Activated CD8-positive, alpha-beta T cell treated with anti-CD3 and anti-CD28 coated beads for 36 hours (primary cell): ENCODE measurements at regions of chr14 and their contacts with region 1.

Region 1: GRCh38 chr14:70714055-70714621 is 72.4 kb downstream of the TTC9 start:
- DNase-seq: peak; percentile 70
- ATAC-seq: peak; percentile 64
- H3K4me3 Mint-ChIP-seq: no peak overlapping the region
- H3K27ac Mint-ChIP-seq: no peak overlapping the region
- H3K4me1 Mint-ChIP-seq: peaks cover 2% of the 10 kb centered on the region
- H3K27me3 Mint-ChIP-seq: no peaks in the 10 kb centered on the region
- CTCF ChIP-seq: peak; percentile 97

Region 2: DNA sequence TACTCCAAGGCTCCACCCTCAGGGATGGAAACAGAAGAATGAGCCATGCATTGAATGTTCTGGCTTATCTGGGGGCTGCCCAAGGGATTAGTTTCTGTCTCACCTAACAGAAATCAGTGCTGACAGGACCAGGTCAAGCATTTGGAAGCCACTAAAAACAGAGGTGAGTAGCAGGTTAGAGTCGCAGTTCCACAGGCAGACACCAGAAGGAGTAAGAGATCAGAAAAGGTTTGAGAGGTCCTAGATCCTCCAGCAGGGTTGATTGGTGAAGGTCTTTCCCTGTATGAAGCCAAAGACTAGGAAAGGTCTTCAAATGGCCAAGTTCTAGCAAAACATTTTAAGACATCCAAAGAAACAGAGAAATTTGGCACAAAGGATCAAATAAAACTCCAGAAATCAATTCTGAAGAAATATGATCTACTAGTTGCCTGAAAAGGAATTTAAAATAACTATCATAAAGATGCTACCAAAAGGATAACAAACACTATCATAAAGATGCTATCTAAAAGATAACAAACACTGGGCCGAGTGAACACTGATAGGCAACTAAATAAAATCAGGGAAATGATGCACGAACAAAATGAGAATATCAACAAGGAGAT is 91.9 kb before region 1 on chr14:
- CTCF ChIA-PET with region 1: interaction called, 102 read pairs
- POLR2A ChIA-PET with region 1: no interaction called
- intact Hi-C with region 1: loop called (anchors 1 kb)
- DNase-seq: peak; percentile 71
- ATAC-seq: peak; percentile 94
- H3K4me3 Mint-ChIP-seq: no peak overlapping the region
- H3K27ac Mint-ChIP-seq: no peak overlapping the region
- H3K4me1 Mint-ChIP-seq: no peaks in the 10 kb centered on the region
- H3K27me3 Mint-ChIP-seq: no peaks in the 10 kb centered on the region
- CTCF ChIP-seq: peak; percentile 83

Region 3: DNA sequence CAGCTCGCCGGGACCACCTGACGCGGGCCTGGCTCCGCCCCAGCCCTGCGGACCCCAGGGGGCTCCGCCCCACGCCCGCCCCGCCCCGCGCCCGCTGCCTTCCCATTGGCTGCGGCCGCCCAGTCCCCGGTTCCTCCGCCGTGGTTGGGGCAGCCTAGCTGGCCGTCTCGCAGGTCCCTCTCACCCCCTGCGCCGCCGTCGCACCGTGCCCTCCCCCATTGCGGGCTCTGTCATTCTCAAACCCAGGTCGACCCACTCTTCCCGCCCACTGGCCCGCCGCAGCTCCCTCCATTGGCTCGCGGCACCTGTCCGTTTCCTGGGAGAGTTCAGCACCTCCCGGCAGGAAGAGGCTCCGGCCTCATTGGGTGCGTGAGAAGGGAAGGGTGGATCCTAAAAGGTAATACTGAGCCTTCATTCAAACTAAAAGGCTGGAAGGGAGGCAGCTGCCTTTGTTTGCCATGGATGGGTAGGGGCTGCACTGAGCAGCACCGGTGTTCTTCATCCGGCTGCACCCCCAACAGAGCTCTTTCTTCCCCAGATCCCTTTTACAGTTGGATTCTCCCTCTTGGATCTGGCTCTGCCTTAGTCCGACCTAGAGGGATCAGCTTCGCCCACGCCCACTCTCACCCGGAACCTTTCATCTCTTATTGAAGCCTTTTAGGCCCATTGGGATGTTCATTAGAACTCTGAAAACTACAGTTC is 95.6 kb after region 1 on chr14:
- CTCF ChIA-PET with region 1: interaction called, 4 read pairs
- POLR2A ChIA-PET with region 1: no interaction called
- intact Hi-C with region 1: loop called (anchors 10 kb)
- DNase-seq: peak; percentile 97
- ATAC-seq: peak; percentile 88
- H3K4me3 Mint-ChIP-seq: no peak overlapping the region
- H3K27ac Mint-ChIP-seq: peak overlapping the region; percentile 87
- H3K4me1 Mint-ChIP-seq: peaks cover 14% of the 10 kb centered on the region
- H3K27me3 Mint-ChIP-seq: no peaks in the 10 kb centered on the region
- CTCF ChIP-seq: no peak

Region 4: GRCh38 chr14:70856851-70857495 is 142.8 kb after region 1 on chr14:
- CTCF ChIA-PET with region 1: no interaction called
- POLR2A ChIA-PET with region 1: no interaction called
- intact Hi-C with region 1: no loop called
- DNase-seq: peak; percentile 39
- ATAC-seq: peak; percentile 88
- H3K4me3 Mint-ChIP-seq: no peak overlapping the region
- H3K27ac Mint-ChIP-seq: no peak overlapping the region
- H3K4me1 Mint-ChIP-seq: peaks cover 5% of the 10 kb centered on the region
- H3K27me3 Mint-ChIP-seq: no peaks in the 10 kb centered on the region
- CTCF ChIP-seq: no peak